ENCODE measurements at regions of chr20 and their contacts with region 1.

Region 1: GRCh38 chr20:46681032-46681854 is 8.0 kb downstream of the TP53RK start:
- DNase-seq: no peak
- ATAC-seq: peak; percentile 79
- H3K4me3 ChIP-seq: no peak overlapping the region
- H3K27ac ChIP-seq: no peak overlapping the region
- H3K4me1 ChIP-seq: peaks cover 0 to 10% of the 10 kb centered on the region in 2 experiments; a peak in 2 of 4 replicates
- H3K27me3 ChIP-seq: no peaks in the 10 kb centered on the region
- CTCF ChIP-seq: peak; percentile 60 to 84 (median 83); a peak in 5 of 6 replicates
- POLR2A ChIP-seq: no peak
- RAD21 ChIP-seq: peak; percentile 67

Region 2: GRCh38 chr20:46520976-46521579 is 160.2 kb before region 1 on chr20:
- CTCF ChIA-PET with region 1: interaction called, 8 read pairs
- POLR2A ChIA-PET with region 1: no interaction called
- RAD21 ChIA-PET with region 1: interaction called in 1 of 2 experiments, 5 read pairs
- intact Hi-C with region 1: loop called (anchors 1 kb)
- DNase-seq: peak; percentile 44
- ATAC-seq: peak; percentile 94
- H3K4me3 ChIP-seq: no peak overlapping the region
- H3K27ac ChIP-seq: no peak overlapping the region
- H3K4me1 ChIP-seq: no peaks in the 10 kb centered on the region
- H3K27me3 ChIP-seq: peaks cover 6% of the 10 kb centered on the region
- CTCF ChIP-seq: peak; percentile 40 to 68 (median 64); a peak in 4 of 6 replicates
- POLR2A ChIP-seq: no peak
- RAD21 ChIP-seq: peak; percentile 77

Region 3: GRCh38 chr20:46562373-46563169 is 118.7 kb before region 1 on chr20:
- CTCF ChIA-PET with region 1: interaction called, 4 read pairs
- POLR2A ChIA-PET with region 1: no interaction called
- RAD21 ChIA-PET with region 1: interaction called in 1 of 2 experiments, 3 read pairs
- intact Hi-C with region 1: loop called (anchors 5 kb)
- DNase-seq: peak; percentile 47
- ATAC-seq: peak; percentile 93
- H3K4me3 ChIP-seq: peak overlapping the region; percentile 30 to 51
- H3K27ac ChIP-seq: no peak overlapping the region
- H3K4me1 ChIP-seq: peaks cover 4 to 14% of the 10 kb centered on the region in 2 experiments; a peak in 2 of 4 replicates
- H3K27me3 ChIP-seq: no peaks in the 10 kb centered on the region
- CTCF ChIP-seq: peak; percentile 33 to 95 (median 86); a peak in 4 of 6 replicates
- POLR2A ChIP-seq: no peak
- RAD21 ChIP-seq: no peak; the same call in 1 of the 2 replicates